Naive thymus-derived CD4-positive, alpha-beta T cell (primary cell): ENCODE measurements at regions of chr6 and their contacts with region 1.

Region 1: GRCh38 chr6:52664186-52664990 is 6.5 kb upstream of the TMEM14A start:
- DNase-seq: peak in 8 of 9 donors; percentile 22 to 73 (median 34)
- ATAC-seq: peak; percentile 78
- H3K4me3 ChIP-seq: peak overlapping the region; percentile 68
- H3K4me3 Mint-ChIP-seq: no peak overlapping the region
- H3K27ac ChIP-seq: peak overlapping the region; percentile 28
- H3K27ac Mint-ChIP-seq: no peak overlapping the region
- H3K4me1 ChIP-seq: peaks cover 0 to 5% of the 10 kb centered on the region in 2 donors
- H3K4me1 Mint-ChIP-seq: peaks cover 0 to 6% (median 0%) of the 10 kb centered on the region in 7 donors
- H3K27me3 ChIP-seq: peaks cover 0 to 3% of the 10 kb centered on the region in 2 donors
- H3K27me3 Mint-ChIP-seq: no peaks in the 10 kb centered on the region

Region 2: DNA sequence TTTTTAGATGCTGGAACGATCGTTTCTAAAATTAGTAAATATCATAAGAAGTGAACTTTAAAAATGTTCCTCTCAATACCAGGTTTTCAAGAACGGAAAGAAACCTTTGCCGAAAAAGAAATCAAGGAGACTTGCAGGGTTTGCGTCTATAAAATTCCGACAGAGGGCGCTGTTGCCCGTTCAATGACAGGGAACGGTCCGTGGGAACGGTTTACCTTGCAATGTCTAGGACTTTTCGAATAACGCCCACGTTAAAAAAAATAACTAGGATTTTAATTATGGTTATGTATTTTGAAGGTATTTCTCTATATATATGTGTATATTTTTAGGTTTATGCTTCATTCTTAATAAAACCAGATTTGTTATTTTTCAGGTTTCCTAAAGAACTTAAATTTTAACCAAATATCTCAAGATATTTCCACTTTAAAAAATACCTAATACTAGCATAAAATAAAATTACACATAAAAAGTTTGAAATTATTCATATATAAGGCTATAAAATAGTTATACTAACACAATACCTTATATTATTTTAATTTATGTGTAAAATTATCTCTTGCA is 1848.2 kb before region 1 on chr6:
- CTCF ChIA-PET with region 1: no interaction called
- POLR2A ChIA-PET with region 1: no interaction called
- intact Hi-C with region 1: loop called in 1 of 2 experiments (anchors 5 kb)
- DNase-seq: peak in 7 of 9 donors; percentile 16 to 55 (median 23)
- ATAC-seq: peak; percentile 57
- H3K4me3 ChIP-seq: peak overlapping the region; percentile 58
- H3K4me3 Mint-ChIP-seq: peak overlapping the region; percentile 66 to 93 (median 87)
- H3K27ac ChIP-seq: no peak overlapping the region
- H3K27ac Mint-ChIP-seq: no peak overlapping the region
- H3K4me1 ChIP-seq: peaks cover 0 to 5% of the 10 kb centered on the region in 2 donors
- H3K4me1 Mint-ChIP-seq: peaks cover 9 to 35% (median 24%) of the 10 kb centered on the region in 7 donors
- H3K27me3 ChIP-seq: peaks cover 0 to 17% of the 10 kb centered on the region in 2 donors
- H3K27me3 Mint-ChIP-seq: peaks cover 45 to 77% (median 68%) of the 10 kb centered on the region in 5 donors

Region 3: GRCh38 chr6:52162940-52163908 is 501.2 kb before region 1 on chr6:
- CTCF ChIA-PET with region 1: interaction called, 10 read pairs
- POLR2A ChIA-PET with region 1: no interaction called
- intact Hi-C with region 1: loop called in 1 of 2 experiments (anchors 1 kb)
- DNase-seq: peak in 7 of 9 donors; percentile 5 to 49 (median 37)
- ATAC-seq: peak; percentile 62
- H3K4me3 ChIP-seq: no peak overlapping the region
- H3K4me3 Mint-ChIP-seq: no peak overlapping the region
- H3K27ac ChIP-seq: no peak overlapping the region
- H3K27ac Mint-ChIP-seq: peak overlapping the region in 1 of 9 donors; percentile 19
- H3K4me1 ChIP-seq: no peaks in the 10 kb centered on the region
- H3K4me1 Mint-ChIP-seq: peaks cover 0 to 9% (median 0%) of the 10 kb centered on the region in 7 donors
- H3K27me3 ChIP-seq: no peaks in the 10 kb centered on the region
- H3K27me3 Mint-ChIP-seq: peaks cover 6 to 26% (median 17%) of the 10 kb centered on the region in 5 donors

Region 4: GRCh38 chr6:52407467-52407866 is 256.9 kb before region 1 on chr6:
- CTCF ChIA-PET with region 1: interaction called, 6 read pairs
- POLR2A ChIA-PET with region 1: interaction called, 3 read pairs
- intact Hi-C with region 1: loop called (anchors 1 kb)
- DNase-seq: peak in 5 of 9 donors; percentile 27 to 52 (median 43)
- ATAC-seq: peak; percentile 84
- H3K4me3 ChIP-seq: no peak overlapping the region
- H3K4me3 Mint-ChIP-seq: no peak overlapping the region
- H3K27ac ChIP-seq: no peak overlapping the region
- H3K27ac Mint-ChIP-seq: peak overlapping the region in 7 of 9 donors; percentile 20 to 79 (median 59)
- H3K4me1 ChIP-seq: no peaks in the 10 kb centered on the region
- H3K4me1 Mint-ChIP-seq: peaks cover 7 to 81% (median 56%) of the 10 kb centered on the region in 7 donors
- H3K27me3 ChIP-seq: no peaks in the 10 kb centered on the region
- H3K27me3 Mint-ChIP-seq: peaks cover 0 to under 1% (median 0%) of the 10 kb centered on the region in 5 donors

Region 5: GRCh38 chr6:52497652-52498408 is 166.6 kb before region 1 on chr6:
- CTCF ChIA-PET with region 1: no interaction called
- POLR2A ChIA-PET with region 1: no interaction called
- intact Hi-C with region 1: loop called (anchors 5 kb)
- DNase-seq: no peak
- ATAC-seq: peak; percentile 53
- H3K4me3 ChIP-seq: no peak overlapping the region
- H3K4me3 Mint-ChIP-seq: no peak overlapping the region
- H3K27ac ChIP-seq: no peak overlapping the region
- H3K27ac Mint-ChIP-seq: peak overlapping the region in 1 of 9 donors; percentile 40
- H3K4me1 ChIP-seq: no peaks in the 10 kb centered on the region
- H3K4me1 Mint-ChIP-seq: peaks cover 0 to 38% (median 0%) of the 10 kb centered on the region in 7 donors
- H3K27me3 ChIP-seq: no peaks in the 10 kb centered on the region
- H3K27me3 Mint-ChIP-seq: no peaks in the 10 kb centered on the region

Region 6: DNA sequence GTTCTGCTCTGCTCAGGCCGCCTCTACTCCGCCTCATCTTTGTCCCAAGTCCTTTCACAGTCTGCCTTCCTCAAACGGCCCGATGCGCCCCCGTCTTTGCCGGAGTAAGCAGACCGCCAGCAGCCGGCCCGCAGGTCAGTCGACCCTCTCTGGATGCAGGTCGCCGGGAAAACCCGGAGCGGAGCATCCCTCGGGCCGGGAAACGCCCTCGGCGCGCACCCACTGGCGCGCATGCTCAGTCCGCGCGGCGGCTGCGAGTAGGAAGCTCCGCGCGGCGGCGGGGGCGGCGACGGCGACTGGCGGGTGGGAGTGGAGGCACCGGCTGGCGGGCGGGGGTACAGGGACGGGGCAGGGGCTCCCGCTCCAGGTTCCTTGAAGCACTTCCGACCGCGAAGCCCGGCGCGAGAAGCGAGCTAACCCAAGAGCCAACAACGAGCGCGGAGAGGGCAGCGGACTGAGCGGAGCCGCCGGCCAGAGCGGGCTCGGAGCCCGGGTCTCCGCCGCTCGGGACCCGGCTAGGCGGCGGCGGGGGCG is 1130.4 kb after region 1 on chr6 and contains the start of gene LRRC1:
- CTCF ChIA-PET with region 1: no interaction called
- POLR2A ChIA-PET with region 1: no interaction called
- intact Hi-C with region 1: loop called in 1 of 2 experiments (anchors 10 kb)
- DNase-seq: peak; percentile 61 to 94 (median 76)
- ATAC-seq: peak; percentile 78
- H3K4me3 ChIP-seq: peak within 1 kb of the TSS; percentile 96
- H3K4me3 Mint-ChIP-seq: peak within 1 kb of the TSS; percentile 93 to 98 (median 96)
- H3K27ac ChIP-seq: peak within 1 kb of the TSS; percentile 43
- H3K27ac Mint-ChIP-seq: peak within 1 kb of the TSS in 8 of 9 donors; percentile 75 to 91 (median 86)
- H3K4me1 ChIP-seq: peaks cover 7 to 13% of the 10 kb centered on the region in 2 donors
- H3K4me1 Mint-ChIP-seq: peaks cover 21 to 33% (median 28%) of the 10 kb centered on the region in 7 donors
- H3K27me3 ChIP-seq: peaks cover 0 to 8% of the 10 kb centered on the region in 2 donors
- H3K27me3 Mint-ChIP-seq: peaks cover 7 to 55% (median 18%) of the 10 kb centered on the region in 5 donors
- total RNA-seq, gene LRRC1: 1.2 to 3.6 (median 3.4) TPM